Colonic mucosa (tissue), 4 donors: ENCODE measurements at regions of chr20 and their contacts with region 1.

Region 1: GRCh38 chr20:35432430-35432735 is 5.6 kb downstream of the GDF5 start:
- DNase-seq: no peak
- H3K4me3 ChIP-seq: no peak overlapping the region
- H3K27ac ChIP-seq: no peak overlapping the region
- H3K4me1 ChIP-seq: no peaks in the 10 kb centered on the region
- H3K27me3 ChIP-seq: no peaks in the 10 kb centered on the region
- CTCF ChIP-seq: no peak

Region 2: DNA sequence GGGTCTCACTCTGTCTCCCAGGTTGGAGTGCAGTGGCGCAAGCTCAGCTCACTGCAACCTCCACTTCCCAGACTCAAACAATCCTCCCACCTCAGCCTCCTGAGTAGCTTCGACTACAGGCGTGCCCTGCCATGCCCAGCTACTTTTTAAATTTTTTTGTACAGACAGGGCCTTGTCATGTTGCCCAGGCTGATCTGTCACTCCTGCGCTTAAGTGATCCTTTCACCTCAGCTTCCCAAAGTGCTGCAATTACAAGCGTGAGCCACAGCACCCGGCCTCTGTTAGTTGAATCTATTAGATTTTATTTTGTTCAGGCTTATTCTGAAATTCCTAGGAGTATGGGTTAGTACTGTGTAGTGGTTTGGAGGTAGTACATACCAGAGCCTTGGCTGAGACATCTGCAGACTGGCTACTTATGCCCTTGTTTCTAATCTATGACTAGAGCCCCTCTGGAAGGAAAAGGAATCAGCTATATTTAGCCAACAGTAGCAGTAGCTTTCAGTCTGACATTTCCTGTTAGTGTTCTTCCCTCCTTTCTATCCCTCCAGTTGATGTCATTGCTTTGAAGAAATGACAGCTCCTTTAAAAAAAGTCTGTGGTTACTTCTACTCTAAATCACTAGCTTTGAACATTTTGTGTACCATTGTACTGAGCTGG is 994.9 kb before region 1 on chr20:
- intact Hi-C with region 1: no loop called
- DNase-seq: no peak
- H3K4me3 ChIP-seq: no peak overlapping the region
- H3K27ac ChIP-seq: no peak overlapping the region
- H3K4me1 ChIP-seq: no peaks in the 10 kb centered on the region
- H3K27me3 ChIP-seq: no peaks in the 10 kb centered on the region
- CTCF ChIP-seq: no peak

Region 3: DNA sequence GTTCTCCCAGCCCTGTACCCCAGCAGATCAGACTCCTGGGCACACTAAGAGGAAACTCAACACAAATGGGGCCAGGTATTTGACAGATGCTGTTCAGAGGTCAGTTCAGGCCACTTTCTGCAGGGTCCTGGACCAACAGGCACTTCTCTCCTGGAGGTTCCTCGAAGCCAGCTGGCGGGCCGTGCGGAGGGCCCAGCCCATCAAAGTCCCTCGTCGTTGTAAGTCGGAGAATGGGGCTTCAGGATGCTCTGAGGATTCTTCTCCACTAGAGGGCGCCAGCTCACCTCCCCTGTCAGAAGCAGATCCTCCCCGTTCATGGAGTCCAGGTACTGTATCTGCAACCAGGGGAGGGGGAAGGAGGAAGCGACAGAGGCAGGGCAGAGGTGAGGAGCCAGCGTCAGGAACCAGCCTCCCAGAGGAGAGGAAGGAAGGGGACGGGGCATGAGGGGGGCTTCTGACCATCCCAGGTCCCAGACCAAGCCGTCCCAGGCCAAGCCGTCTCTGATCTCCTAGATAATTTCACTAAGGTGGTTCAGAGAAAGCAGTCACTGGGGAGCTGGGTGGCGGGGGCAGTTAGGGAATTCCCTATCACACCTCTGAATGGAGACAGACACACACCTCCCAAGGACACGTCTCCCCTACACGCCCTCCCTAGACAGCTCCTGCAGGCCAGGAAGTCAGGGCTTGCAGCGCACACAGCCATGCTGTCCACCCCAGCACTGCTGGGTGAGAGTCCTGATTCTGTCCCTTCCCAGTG is 128.5 kb before region 1 on chr20:
- intact Hi-C with region 1: loop called (anchors 5 kb)
- DNase-seq: peak; percentile 87
- H3K4me3 ChIP-seq: no peak overlapping the region
- H3K27ac ChIP-seq: no peak overlapping the region
- H3K4me1 ChIP-seq: no peaks in the 10 kb centered on the region
- H3K27me3 ChIP-seq: no peaks in the 10 kb centered on the region
- CTCF ChIP-seq: peak; percentile 83